ENCODE measurements at regions of chr6 and their contacts with region 1.

Region 1: DNA sequence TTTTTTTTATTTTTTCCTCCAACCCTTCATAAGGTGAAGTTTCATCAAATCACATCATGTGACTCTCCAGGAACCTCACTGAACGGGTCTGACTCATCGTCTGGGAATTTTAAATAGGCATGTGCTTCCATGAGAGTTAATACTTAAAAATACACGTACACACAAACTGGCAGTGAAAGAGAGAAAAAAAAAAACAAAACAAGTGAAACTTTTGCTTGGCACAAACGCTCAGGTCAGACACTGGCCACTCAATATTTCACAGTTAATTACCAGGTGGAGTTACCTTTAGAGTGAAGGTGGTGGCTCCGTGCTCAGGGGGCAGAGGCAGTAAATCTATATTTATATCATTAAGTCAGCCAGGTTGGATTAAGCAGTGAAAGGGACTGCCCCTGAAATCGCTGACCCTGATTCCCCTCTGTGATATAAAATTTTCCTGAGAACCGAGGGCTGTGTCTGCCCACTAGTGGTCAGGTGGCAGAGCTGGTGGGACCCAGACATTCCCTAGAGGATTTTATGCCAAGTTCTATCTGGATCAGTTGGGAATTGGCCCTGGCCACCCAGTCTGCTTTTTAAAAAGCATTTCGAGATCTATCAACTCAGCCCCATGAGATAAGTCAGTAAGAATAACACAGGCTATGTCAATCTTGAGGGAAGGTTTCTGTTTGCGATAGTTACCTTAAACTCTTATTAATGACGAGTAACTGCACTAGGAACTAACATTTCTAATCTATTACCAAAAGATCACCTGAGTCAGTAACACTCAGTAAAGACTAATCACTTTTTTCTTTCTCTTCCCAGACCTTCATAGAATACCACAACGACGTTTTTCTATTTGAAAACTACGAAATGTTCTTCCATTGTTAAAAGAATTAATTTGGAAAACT is 259.1 kb downstream of the HDGFL1 start:
- DNase-seq: peak; percentile 97
- ATAC-seq: peak; percentile 55
- H3K4me3 ChIP-seq: peak overlapping the region; percentile 42
- H3K27ac ChIP-seq: peak overlapping the region; percentile 77
- H3K4me1 ChIP-seq: peaks cover 42% of the 10 kb centered on the region
- H3K27me3 ChIP-seq: no peaks in the 10 kb centered on the region
- CTCF ChIP-seq: peak; percentile 94

Region 2: GRCh38 chr6:22145823-22146677 is 682.4 kb before region 1 on chr6:
- CTCF ChIA-PET with region 1: no interaction called
- POLR2A ChIA-PET with region 1: no interaction called
- intact Hi-C with region 1: loop called (anchors 5 kb)
- DNase-seq: no peak
- ATAC-seq: no peak
- H3K4me3 ChIP-seq: no peak overlapping the region
- H3K27ac ChIP-seq: no peak overlapping the region
- H3K4me1 ChIP-seq: peaks cover 10% of the 10 kb centered on the region
- H3K27me3 ChIP-seq: no peaks in the 10 kb centered on the region
- CTCF ChIP-seq: no peak

Region 3: GRCh38 chr6:22372922-22373321 is 455.5 kb before region 1 on chr6:
- CTCF ChIA-PET with region 1: no interaction called
- POLR2A ChIA-PET with region 1: no interaction called
- intact Hi-C with region 1: loop called (anchors 5 kb)
- DNase-seq: no peak
- ATAC-seq: no peak
- H3K4me3 ChIP-seq: no peak overlapping the region
- H3K27ac ChIP-seq: no peak overlapping the region
- H3K4me1 ChIP-seq: peaks cover 7% of the 10 kb centered on the region; the same call in 1 of the 2 replicates
- H3K27me3 ChIP-seq: no peaks in the 10 kb centered on the region
- CTCF ChIP-seq: no peak

Region 4: DNA sequence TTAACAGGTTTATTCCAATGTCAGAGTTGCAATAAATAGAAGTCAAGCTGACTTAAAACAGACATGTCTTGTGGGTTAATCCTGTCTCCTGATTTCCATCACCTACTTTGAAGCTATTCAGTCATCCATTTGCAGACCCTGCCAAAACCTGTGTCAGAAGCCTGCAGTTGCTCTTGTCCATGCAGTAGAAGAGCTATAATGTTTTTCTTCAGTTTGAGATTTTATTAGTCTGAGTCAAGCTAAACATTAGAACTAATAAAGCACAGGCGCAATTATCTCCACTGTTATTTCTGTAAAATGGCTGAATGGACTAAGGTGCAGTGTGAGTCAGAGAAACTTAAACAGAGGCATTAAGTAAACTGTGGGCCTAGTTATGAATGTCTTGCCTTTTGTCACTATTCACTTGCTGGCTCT is 270.1 kb before region 1 on chr6:
- CTCF ChIA-PET with region 1: no interaction called
- POLR2A ChIA-PET with region 1: no interaction called
- intact Hi-C with region 1: loop called (anchors 5 kb)
- DNase-seq: peak; percentile 93
- ATAC-seq: peak; percentile 95
- H3K4me3 ChIP-seq: no peak overlapping the region
- H3K27ac ChIP-seq: peak overlapping the region; percentile 74
- H3K4me1 ChIP-seq: peaks cover 21% of the 10 kb centered on the region
- H3K27me3 ChIP-seq: no peaks in the 10 kb centered on the region
- CTCF ChIP-seq: no peak

Region 5: DNA sequence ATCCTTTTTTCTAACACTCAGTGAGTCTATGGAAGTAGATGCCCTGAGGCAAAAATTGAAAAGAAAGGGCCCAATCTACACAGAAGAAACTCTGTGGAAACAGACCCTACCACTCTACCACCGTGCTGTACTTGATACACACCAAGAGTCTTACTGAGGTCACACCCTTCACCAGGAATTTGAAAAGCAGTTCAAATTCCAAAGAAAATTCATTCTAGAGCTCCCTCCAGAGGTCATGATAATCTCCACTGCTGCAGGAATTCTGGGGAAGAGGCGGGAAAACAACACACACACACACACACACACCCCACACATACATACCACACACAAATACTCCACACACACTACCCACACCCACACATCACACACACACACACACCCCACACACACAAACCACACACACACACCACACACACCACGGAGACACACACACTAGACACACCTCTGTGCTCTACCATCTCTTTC is 77.7 kb after region 1 on chr6:
- CTCF ChIA-PET with region 1: no interaction called
- POLR2A ChIA-PET with region 1: no interaction called
- intact Hi-C with region 1: loop called (anchors 5 kb)
- DNase-seq: peak; percentile 79
- ATAC-seq: peak; percentile 73
- H3K4me3 ChIP-seq: no peak overlapping the region
- H3K27ac ChIP-seq: no peak overlapping the region
- H3K4me1 ChIP-seq: peaks cover 4% of the 10 kb centered on the region; the same call in 1 of the 2 replicates
- H3K27me3 ChIP-seq: no peaks in the 10 kb centered on the region
- CTCF ChIP-seq: peak; percentile 73

Region 6: GRCh38 chr6:23446394-23447046 is 618.1 kb after region 1 on chr6:
- CTCF ChIA-PET with region 1: no interaction called
- POLR2A ChIA-PET with region 1: no interaction called
- intact Hi-C with region 1: loop called (anchors 10 kb)
- DNase-seq: peak; percentile 79
- ATAC-seq: peak; percentile 81
- H3K4me3 ChIP-seq: no peak overlapping the region
- H3K27ac ChIP-seq: no peak overlapping the region
- H3K4me1 ChIP-seq: 0 out of 2 replicates have a peak, but pooled peaks cover 4% of the 10 kb centered on the region
- H3K27me3 ChIP-seq: no peaks in the 10 kb centered on the region
- CTCF ChIP-seq: peak; percentile 85